Heart left ventricle (tissue), 16 donors: ENCODE measurements at regions of chr14 and their contacts with region 1.

Region 1: DNA sequence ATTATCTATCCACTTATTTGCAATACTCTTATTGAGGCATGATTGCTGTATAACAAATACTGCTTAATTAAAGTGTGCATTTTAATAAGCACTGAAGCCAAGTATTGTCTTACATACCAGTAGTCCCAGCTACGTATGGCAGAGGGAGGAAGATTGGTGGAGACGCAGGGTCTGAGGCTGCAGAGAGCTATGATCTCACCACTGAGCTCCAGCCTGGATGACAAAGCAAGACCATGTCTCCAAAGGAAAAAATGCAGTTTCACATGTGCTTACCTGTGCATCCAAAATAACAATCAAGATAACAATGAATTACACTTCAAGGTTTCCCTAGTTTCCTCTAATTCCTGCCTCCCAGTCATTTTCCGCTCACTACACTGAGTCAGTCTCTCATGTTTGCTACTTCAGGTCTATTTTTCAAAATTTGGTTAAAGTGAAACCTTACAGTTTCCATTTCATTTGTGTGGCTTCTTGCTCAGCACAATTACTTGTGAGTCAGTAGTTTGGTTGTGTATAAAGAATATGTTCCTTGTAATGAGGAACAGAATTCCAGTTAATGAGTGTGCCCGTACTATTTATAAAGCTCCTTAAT is 1250.1 kb downstream of the TMEM121 start:
- DNase-seq: no peak
- ATAC-seq: no peak
- H3K4me3 ChIP-seq: no peak overlapping the region
- H3K27ac ChIP-seq: no peak overlapping the region
- H3K4me1 ChIP-seq: no peaks in the 10 kb centered on the region
- H3K27me3 ChIP-seq: peaks cover 0 to 23% (median 0%) of the 10 kb centered on the region in 9 donors
- CTCF ChIP-seq: no peak
- POLR2A ChIP-seq: no peak

Region 2: DNA sequence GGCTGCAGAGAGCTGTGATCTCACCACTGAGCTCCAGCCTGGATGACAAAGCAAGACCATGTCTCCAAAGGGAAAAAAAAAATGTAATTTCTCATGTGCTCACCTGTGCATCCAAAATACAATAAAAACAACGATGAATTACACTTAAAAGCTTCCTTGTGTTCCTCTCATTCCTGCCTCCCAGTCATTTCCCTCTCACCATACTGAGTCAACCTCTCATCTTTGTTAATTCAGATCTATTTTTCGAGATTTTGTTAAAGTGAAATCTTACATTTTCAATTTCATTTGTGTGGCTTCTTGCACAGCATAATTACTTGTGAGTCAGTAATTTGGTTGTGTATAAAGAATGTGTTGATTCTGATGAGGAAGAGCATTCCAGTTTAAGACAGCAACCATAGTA is 46.9 kb before region 1 on chr14:
- intact Hi-C with region 1: loop called in 1 of 10 experiments (anchors 5 kb)
- DNase-seq: no peak
- ATAC-seq: no peak
- H3K4me3 ChIP-seq: no peak overlapping the region
- H3K27ac ChIP-seq: no peak overlapping the region
- H3K4me1 ChIP-seq: no peaks in the 10 kb centered on the region
- H3K27me3 ChIP-seq: no peaks in the 10 kb centered on the region
- CTCF ChIP-seq: no peak
- POLR2A ChIP-seq: no peak